Sigmoid colon (tissue), 7 donors: ENCODE measurements at regions of chr3 and their contacts with region 1.

Region 1: GRCh38 chr3:65497846-65498245 is 540.9 kb downstream of the MAGI1 start:
- DNase-seq: no peak
- H3K4me3 ChIP-seq: no peak overlapping the region
- H3K27ac ChIP-seq: peak overlapping the region in 1 of 4 donors; percentile 9
- H3K4me1 ChIP-seq: peaks cover 0 to 19% (median 14%) of the 10 kb centered on the region in 4 donors
- H3K27me3 ChIP-seq: no peaks in the 10 kb centered on the region
- CTCF ChIP-seq: no peak
- EP300 ChIP-seq: no peak
- POLR2A ChIP-seq: no peak

Region 2: GRCh38 chr3:65548848-65549625 is 51.2 kb after region 1 on chr3:
- intact Hi-C with region 1: loop called (anchors 10 kb)
- DNase-seq: peak; percentile 79
- H3K4me3 ChIP-seq: peak overlapping the region; percentile 57 to 71 (median 64)
- H3K27ac ChIP-seq: peak overlapping the region; percentile 75 to 86 (median 81)
- H3K4me1 ChIP-seq: peaks cover 0 to 15% (median 8%) of the 10 kb centered on the region in 4 donors
- H3K27me3 ChIP-seq: no peaks in the 10 kb centered on the region
- CTCF ChIP-seq: no peak
- EP300 ChIP-seq: no peak
- POLR2A ChIP-seq: no peak